OCI-LY7 (cell line): ENCODE measurements at regions of chrX and their contacts with region 1.

Region 1: GRCh38 chrX:152926279-152926678 is 28.4 kb downstream of the ZNF185 start:
- DNase-seq: peak; percentile 70
- H3K4me3 ChIP-seq: no peak overlapping the region
- H3K27ac ChIP-seq: no peak overlapping the region
- H3K4me1 ChIP-seq: peaks cover 4% of the 10 kb centered on the region
- CTCF ChIP-seq: peak; percentile 71

Region 2: DNA sequence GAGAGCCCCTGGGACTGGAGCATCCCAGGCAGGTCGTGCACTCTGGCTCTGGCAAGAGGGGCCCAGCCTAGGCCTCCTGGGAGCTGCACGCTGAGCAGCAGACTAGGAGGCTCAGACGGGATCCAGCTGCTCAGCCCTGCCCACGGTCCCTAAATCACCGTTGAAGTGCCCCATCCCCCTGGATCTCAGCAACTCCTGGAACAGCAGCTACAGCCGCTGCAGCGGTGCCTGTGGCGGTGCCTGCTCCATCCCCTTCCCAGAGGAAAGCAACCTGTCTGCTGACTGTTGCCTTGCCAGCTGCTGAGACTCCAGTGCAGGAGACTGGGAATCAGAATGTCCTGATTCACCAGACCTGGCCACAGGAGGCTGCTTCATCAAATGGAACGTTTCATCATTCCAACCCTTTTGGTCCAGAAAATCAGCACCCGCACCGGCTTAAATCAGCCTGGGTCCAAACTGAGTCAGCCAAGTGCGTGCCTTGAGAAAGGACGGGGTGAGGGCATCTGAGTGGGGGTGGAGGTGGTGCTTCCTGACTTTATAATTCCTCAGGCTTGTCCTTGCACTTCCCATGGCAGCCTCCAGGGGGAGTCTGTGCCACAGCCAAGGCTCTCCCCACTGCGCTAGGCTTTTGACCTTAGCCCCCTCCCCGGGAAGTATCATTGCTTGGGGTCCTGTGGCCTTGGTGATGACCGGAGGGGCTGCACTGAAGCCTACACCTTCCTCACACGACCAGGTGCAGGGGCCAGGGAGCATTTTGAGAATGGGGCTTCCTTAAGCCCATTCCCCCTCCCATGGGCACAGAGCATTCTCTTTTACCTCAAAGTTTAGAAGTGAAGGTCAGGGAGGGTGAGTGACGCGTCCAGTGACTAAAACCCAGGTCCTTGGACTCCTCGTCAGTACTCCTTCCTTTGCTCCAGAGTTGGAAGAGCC is 21.9 kb before region 1 on chrX:
- CTCF ChIA-PET with region 1: no interaction called
- POLR2A ChIA-PET with region 1: no interaction called
- intact Hi-C with region 1: loop called (anchors 1 kb)
- DNase-seq: peak; percentile 36
- H3K4me3 ChIP-seq: no peak overlapping the region
- H3K27ac ChIP-seq: no peak overlapping the region
- H3K4me1 ChIP-seq: no peaks in the 10 kb centered on the region
- CTCF ChIP-seq: peak; percentile 72

Region 3: GRCh38 chrX:153319295-153320046 is 393.2 kb after region 1 on chrX:
- CTCF ChIA-PET with region 1: no interaction called
- POLR2A ChIA-PET with region 1: no interaction called
- intact Hi-C with region 1: no loop called
- DNase-seq: peak; percentile 46
- H3K4me3 ChIP-seq: no peak overlapping the region
- H3K27ac ChIP-seq: no peak overlapping the region
- H3K4me1 ChIP-seq: no peaks in the 10 kb centered on the region
- CTCF ChIP-seq: no peak